ENCODE measurements at regions of chr18 and their contacts with region 1.

Region 1: DNA sequence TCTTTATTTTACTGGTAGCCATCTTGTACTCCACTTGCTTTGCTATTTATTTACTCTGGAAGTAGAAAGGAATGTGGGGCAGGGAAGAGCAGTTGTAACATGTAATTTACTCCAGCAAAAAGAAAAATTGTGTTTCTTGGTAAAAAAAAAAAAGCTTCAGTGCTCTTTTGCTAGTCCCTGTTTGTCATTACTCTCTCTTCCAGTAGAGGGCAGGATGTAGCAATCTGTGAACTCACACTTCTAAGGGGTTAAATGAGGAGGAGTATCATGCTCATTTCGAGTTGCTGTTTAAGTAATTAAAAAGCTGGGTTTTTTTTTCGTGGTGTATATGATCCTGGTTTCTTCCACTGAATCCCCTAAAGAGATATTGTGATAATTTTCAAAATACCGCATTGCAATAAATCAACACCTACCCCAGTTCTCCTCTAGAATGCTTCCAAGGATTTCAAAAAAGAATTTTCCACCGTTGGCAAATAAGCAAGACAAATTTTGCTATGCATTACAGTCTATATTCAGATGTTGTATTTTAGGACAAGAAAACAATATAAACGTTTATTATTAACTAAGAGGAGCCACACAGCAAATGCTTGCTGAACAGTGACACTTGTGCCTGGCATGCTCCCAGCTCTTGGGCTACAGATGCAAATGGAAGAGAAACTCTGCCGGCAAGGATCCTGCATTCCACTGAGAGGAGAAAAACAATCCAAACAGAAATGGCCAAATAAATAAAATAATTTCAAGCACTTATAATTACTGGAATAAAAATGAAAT is 261.6 kb downstream of the ASXL3 start:
- DNase-seq: peak; percentile 80
- H3K4me3 ChIP-seq: no peak overlapping the region
- H3K27ac ChIP-seq: peak overlapping the region; percentile 88
- H3K4me1 ChIP-seq: peaks cover 68% of the 10 kb centered on the region
- CTCF ChIP-seq: peak; percentile 85

Region 2: GRCh38 chr18:33854086-33854826 is 14.6 kb after region 1 on chr18:
- CTCF ChIA-PET with region 1: interaction called, 7 read pairs
- POLR2A ChIA-PET with region 1: interaction called, 133 read pairs
- intact Hi-C with region 1: loop called (anchors 1 kb)
- DNase-seq: peak; percentile 81
- H3K4me3 ChIP-seq: peak overlapping the region; percentile 74
- H3K27ac ChIP-seq: peak overlapping the region; percentile 100
- H3K4me1 ChIP-seq: peaks cover 64% of the 10 kb centered on the region
- CTCF ChIP-seq: no peak

Region 3: GRCh38 chr18:33870059-33870458 is 30.4 kb after region 1 on chr18:
- CTCF ChIA-PET with region 1: no interaction called
- POLR2A ChIA-PET with region 1: interaction called, 10 read pairs
- intact Hi-C with region 1: loop called (anchors 1 kb)
- DNase-seq: no peak
- H3K4me3 ChIP-seq: no peak overlapping the region
- H3K27ac ChIP-seq: no peak overlapping the region
- H3K4me1 ChIP-seq: peaks cover 52% of the 10 kb centered on the region
- CTCF ChIP-seq: no peak

Region 4: GRCh38 chr18:33916200-33916599 is 76.6 kb after region 1 on chr18:
- CTCF ChIA-PET with region 1: no interaction called
- POLR2A ChIA-PET with region 1: no interaction called
- intact Hi-C with region 1: loop called (anchors 2 kb)
- DNase-seq: no peak
- H3K4me3 ChIP-seq: no peak overlapping the region
- H3K27ac ChIP-seq: no peak overlapping the region
- H3K4me1 ChIP-seq: peaks cover 29% of the 10 kb centered on the region
- CTCF ChIP-seq: 0 out of 2 replicates have a peak, but pooled peaks have one; percentile 27

Region 5: GRCh38 chr18:34077599-34077998 is 238.0 kb after region 1 on chr18:
- CTCF ChIA-PET with region 1: no interaction called
- POLR2A ChIA-PET with region 1: interaction called, 3 read pairs
- intact Hi-C with region 1: loop called (anchors 2 kb)
- DNase-seq: no peak
- H3K4me3 ChIP-seq: no peak overlapping the region
- H3K27ac ChIP-seq: no peak overlapping the region
- H3K4me1 ChIP-seq: no peaks in the 10 kb centered on the region
- CTCF ChIP-seq: peak; percentile 61

Region 6: GRCh38 chr18:34122724-34123334 is 283.2 kb after region 1 on chr18:
- CTCF ChIA-PET with region 1: no interaction called
- POLR2A ChIA-PET with region 1: interaction called, 5 read pairs
- intact Hi-C with region 1: loop called (anchors 2 kb)
- DNase-seq: peak; percentile 68
- H3K4me3 ChIP-seq: no peak overlapping the region
- H3K27ac ChIP-seq: no peak overlapping the region
- H3K4me1 ChIP-seq: peaks cover 13% of the 10 kb centered on the region
- CTCF ChIP-seq: peak; percentile 87